Cardiac septum (tissue), 1 donor: ENCODE measurements at regions of chr13 and their contacts with region 1.

Region 1: DNA sequence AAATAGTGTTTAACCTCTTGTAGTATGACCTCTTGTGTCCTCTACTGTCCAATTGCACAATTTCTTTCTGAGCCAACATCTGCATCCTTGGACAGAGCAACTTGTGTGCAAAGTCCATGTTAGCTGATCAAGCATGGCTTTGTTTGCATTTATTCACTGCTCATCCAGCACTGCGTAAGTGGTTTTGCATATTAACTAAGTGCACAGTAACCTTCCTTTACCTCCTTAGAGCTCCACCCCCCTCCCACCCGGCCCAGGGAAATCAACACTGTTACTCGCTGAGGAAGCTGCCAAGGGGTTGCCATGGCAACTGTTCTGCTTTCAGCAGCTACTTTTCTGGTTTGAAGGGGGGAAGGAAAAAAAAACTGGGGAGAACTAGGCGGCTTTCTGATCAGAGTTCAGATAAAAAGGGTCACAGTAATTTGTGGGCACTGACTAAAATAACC is 153.5 kb upstream of the KLF12 start:
- DNase-seq: peak; percentile 77

Region 2: GRCh38 chr13:73754727-73755292 is 532.9 kb before region 1 on chr13:
- intact Hi-C with region 1: loop called (anchors 5 kb)
- DNase-seq: no peak

Region 3: GRCh38 chr13:73835138-73835721 is 452.5 kb before region 1 on chr13:
- intact Hi-C with region 1: loop called (anchors 2 kb)
- DNase-seq: no peak

Region 4: GRCh38 chr13:74258961-74259360 is 28.8 kb before region 1 on chr13:
- intact Hi-C with region 1: no loop called
- DNase-seq: no peak

Region 5: GRCh38 chr13:74443631-74444030 is 155.9 kb after region 1 on chr13:
- intact Hi-C with region 1: no loop called
- DNase-seq: no peak